ENCODE measurements at regions of chr3 and their contacts with region 1.

Region 1: DNA sequence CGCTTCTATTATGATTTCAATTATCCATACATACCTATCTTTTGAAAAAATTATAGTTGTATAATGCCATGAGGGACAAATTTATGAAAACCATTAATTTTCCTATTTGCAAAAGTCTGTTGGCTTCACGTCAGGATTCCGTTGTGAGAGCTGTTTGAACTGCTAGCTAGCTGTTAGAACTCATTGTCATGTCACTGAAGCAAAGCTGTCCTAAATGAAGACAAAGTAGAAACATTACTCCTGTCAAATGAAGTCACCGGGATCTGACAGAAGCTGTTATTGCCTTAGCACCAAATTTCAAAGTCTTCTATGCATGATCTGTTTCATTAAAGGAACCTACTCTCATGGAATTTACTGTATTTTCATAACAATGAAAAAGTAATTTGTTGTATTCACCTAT is 479.8 kb downstream of the PLOD2 start:
- DNase-seq: no peak
- H3K4me3 ChIP-seq: no peak overlapping the region
- CTCF ChIP-seq: no peak
- POLR2A ChIP-seq: no peak

Region 2: GRCh38 chr3:145639875-145640274 is 41.3 kb before region 1 on chr3:
- intact Hi-C with region 1: loop called (anchors 5 kb)
- DNase-seq: no peak
- H3K4me3 ChIP-seq: no peak overlapping the region
- CTCF ChIP-seq: no peak
- POLR2A ChIP-seq: no peak

Region 3: DNA sequence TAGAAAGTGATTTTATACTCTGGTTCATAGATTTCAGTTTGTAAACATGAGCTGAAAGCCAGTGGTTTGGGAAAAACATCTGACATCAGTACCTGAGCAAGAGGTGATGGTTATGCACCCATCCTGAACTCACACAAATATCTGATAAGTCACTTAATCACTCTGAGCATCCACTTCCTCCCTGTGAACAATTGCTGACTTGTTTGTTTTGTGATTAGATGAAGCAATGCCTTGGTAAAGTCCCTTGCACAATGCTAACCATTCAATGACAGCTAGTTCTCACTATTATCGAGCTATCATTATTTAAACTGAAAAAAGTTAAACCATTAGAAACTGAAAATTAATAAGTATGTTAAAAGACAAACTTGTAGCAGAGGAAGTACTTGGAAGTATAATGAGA is 176.8 kb after region 1 on chr3:
- intact Hi-C with region 1: no loop called
- DNase-seq: no peak
- H3K4me3 ChIP-seq: no peak overlapping the region
- CTCF ChIP-seq: no peak
- POLR2A ChIP-seq: no peak